Transverse colon (tissue), 4 donors: ENCODE measurements at regions of chr5 and their contacts with region 1.

Region 1: DNA sequence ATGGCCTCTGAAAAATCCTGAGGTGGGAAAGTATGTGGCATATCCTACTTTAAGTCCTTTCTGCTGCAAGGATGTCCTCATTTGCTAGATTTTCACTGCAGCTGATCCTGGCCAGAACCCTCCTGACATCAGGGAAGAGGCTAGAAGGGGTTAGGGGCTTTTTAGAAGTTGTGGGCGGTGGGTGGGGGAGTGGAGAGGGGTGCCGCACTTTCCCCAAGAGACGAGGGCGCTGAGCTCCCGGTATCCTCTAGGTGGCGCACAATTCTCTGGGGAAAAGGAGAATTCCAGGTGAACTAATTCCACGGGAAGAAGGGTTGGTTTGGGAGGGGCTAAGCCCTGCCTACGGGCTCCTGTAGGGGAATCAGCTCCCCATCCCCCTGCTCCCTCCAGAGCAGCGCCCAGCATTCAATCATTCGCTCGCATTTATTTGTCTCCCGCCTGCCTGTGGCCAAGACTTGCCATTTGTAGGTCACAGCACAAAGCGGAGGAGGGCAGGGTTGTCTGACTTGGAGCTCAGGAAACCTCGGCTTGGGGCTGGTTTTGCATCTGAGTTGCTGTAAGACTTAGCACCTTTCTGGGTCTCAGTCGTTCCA is 42.9 kb upstream of the HAND1 start:
- DNase-seq: peak; percentile 24
- H3K4me3 ChIP-seq: no peak overlapping the region
- H3K27ac ChIP-seq: no peak overlapping the region
- H3K4me1 ChIP-seq: peaks cover 0 to 5% (median 0%) of the 10 kb centered on the region in 4 donors
- H3K27me3 ChIP-seq: peaks cover 18% of the 10 kb centered on the region
- CTCF ChIP-seq: peak; percentile 55 to 71 (median 65)
- EP300 ChIP-seq: no peak
- POLR2A ChIP-seq: no peak

Region 2: DNA sequence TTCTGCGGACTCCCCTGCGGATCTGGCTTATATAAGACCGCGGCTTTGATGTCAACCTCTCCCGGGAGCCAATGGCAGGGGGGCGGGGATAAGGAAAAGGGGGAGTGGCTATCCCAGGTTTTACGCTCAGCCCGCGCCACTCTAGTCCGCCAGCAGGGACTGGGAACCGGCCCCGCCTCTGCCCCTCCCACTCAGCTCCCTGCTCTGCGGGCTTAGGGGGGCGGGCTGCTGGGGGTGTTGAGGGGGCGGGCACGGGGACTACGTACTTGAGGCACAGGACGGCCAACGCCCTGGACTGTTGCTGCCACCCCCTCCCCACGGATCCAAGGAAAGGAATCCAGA is 42.8 kb before region 1 on chr5 and contains the start of gene HAND1:
- in situ Hi-C with region 1: no loop called
- intact Hi-C with region 1: loop called (anchors 10 kb)
- DNase-seq: peak; percentile 75
- H3K4me3 ChIP-seq: peak within 1 kb of the TSS; percentile 25 to 51 (median 34)
- H3K27ac ChIP-seq: peak within 1 kb of the TSS; percentile 56 to 91 (median 80)
- H3K4me1 ChIP-seq: peaks cover 7 to 63% (median 46%) of the 10 kb centered on the region in 4 donors
- H3K27me3 ChIP-seq: peaks cover 100% of the 10 kb centered on the region
- CTCF ChIP-seq: peak in 1 of 5 experiments; percentile 3
- EP300 ChIP-seq: no peak
- POLR2A ChIP-seq: no peak
- total RNA-seq, gene HAND1: 6.7 to 8.0 (median 7.4) TPM

Region 3: DNA sequence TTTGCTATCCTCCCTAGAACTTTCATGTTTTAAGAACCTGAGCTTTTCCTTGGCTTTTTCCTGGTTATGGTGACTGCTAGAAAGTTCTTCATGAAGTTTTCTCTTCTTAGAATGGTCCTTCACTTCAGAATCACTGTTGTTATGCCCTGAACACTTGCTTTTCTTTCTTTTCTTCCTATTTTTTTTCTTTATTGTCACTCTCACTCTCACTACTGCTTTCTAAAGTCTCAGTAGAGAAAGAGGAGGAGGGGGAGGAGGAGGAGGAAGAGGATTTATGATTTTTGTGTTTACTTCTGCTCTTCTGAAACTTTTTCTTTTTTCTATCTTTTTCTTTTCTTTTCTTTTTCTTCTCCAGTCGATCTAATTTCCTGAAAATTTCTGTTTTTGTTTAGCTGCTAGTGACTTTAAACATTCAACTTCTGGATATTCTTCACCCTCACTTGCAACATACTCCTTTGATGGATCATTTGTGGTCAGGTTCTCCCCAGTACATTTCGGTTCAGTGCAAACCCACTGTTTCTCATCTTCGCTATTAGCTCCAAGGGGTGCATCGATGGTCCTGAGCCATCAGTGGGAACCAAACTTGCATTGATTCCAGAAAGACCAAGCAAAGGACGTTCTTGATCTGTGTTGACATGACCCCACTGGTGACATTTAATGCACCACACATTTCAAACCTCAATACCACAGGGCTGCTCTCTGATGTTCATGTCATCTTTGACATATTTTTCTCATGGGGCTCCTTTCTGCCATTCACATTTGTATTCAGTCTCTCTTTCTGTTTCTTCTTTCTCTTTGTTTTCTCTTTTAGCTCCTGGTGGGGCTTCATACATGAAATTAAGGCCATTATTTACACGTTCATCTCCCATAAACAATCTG is 38.7 kb after region 1 on chr5:
- in situ Hi-C with region 1: no loop called
- intact Hi-C with region 1: no loop called
- DNase-seq: no peak
- H3K4me3 ChIP-seq: no peak overlapping the region
- H3K27ac ChIP-seq: no peak overlapping the region
- H3K4me1 ChIP-seq: no peaks in the 10 kb centered on the region
- H3K27me3 ChIP-seq: no peaks in the 10 kb centered on the region
- CTCF ChIP-seq: no peak
- EP300 ChIP-seq: no peak
- POLR2A ChIP-seq: no peak

Region 4: GRCh38 chr5:154603978-154604679 is 83.2 kb after region 1 on chr5:
- in situ Hi-C with region 1: loop called in 1 of 4 experiments (anchors 10 kb)
- intact Hi-C with region 1: no loop called
- DNase-seq: peak; percentile 14
- H3K4me3 ChIP-seq: no peak overlapping the region
- H3K27ac ChIP-seq: peak overlapping the region in 3 of 4 donors; percentile 7 to 28 (median 17)
- H3K4me1 ChIP-seq: peaks cover 0 to 5% (median 4%) of the 10 kb centered on the region in 4 donors
- H3K27me3 ChIP-seq: peaks cover 39% of the 10 kb centered on the region
- CTCF ChIP-seq: no peak
- EP300 ChIP-seq: no peak
- POLR2A ChIP-seq: no peak